Activated CD4-positive, alpha-beta T cell treated with anti-CD3 and anti-CD28 coated beads, Interleukin-2, amount 10 ng/mL, durations not matched to agents 24 days and 14 days (primary cell): ENCODE measurements at regions of chr1 and their contacts with region 1.

Region 1: GRCh38 chr1:200351826-200352549 is 57.8 kb downstream of the ZNF281 start:
- DNase-seq: peak; percentile 77
- H3K4me3 Mint-ChIP-seq: peak overlapping the region; percentile 53
- H3K27ac Mint-ChIP-seq: peak overlapping the region; percentile 67
- H3K4me1 Mint-ChIP-seq: peaks cover 38% of the 10 kb centered on the region
- H3K27me3 Mint-ChIP-seq: no peaks in the 10 kb centered on the region

Region 2: DNA sequence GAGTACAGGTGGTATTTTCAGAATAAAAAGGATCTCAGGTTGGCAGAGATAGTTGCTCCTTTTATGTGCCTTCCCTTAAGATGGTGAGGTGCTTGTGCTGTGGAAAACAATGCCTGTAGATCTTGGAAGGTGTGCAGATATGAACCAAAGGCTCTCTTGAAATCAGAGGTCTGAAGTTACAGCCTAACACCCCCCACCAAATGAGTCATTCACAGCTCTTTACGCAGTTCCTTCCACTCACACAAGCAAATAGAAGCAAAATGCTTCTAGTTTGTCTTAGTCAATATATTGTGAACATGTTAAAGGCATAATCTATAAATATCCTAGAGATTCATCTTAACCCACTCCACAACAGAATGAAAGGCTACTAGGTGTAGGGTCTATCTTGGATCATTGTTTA is 453.3 kb before region 1 on chr1:
- intact Hi-C with region 1: no loop called
- DNase-seq: no peak
- H3K4me3 Mint-ChIP-seq: no peak overlapping the region
- H3K27ac Mint-ChIP-seq: no peak overlapping the region
- H3K4me1 Mint-ChIP-seq: no peaks in the 10 kb centered on the region
- H3K27me3 Mint-ChIP-seq: no peaks in the 10 kb centered on the region

Region 3: DNA sequence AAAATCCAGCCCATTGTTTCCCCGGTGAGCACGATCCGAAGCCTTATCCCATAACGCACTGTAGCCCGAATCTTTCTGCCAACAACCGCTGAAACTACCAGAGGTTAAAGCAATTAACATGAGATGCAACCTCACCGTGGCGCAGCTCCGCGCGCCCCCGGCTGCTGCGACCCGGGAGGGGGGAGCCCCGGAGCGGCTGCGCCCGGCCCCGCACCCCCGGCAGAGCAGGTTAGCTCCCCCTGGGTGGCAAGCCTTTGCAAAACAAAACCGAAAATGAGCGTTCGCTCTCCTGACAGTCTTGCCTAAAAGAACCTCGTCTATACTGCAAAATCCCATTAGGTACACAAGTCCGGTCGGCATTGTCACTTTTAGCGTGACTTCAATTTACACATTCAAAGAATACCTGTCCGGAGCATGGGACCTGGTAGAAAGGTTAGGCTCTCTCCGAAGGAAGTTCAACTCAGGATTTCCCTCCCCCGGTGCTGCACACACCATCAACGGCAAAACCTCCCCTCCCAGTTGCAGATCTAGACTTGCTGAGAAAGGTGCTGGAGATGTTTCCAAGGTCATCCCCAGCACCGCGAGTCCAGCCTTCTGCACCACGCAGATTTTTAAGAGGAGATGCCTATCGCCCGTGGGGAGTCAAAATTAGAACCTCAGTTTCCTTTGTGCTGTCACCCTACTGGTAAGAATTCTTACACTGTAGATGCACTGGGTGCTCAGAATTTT is 49.6 kb before region 1 on chr1:
- intact Hi-C with region 1: loop called (anchors 2 kb)
- DNase-seq: peak; percentile 90
- H3K4me3 Mint-ChIP-seq: peak overlapping the region; percentile 86
- H3K27ac Mint-ChIP-seq: peak overlapping the region; percentile 17
- H3K4me1 Mint-ChIP-seq: peaks cover 20% of the 10 kb centered on the region
- H3K27me3 Mint-ChIP-seq: peaks cover 38% of the 10 kb centered on the region

Region 4: DNA sequence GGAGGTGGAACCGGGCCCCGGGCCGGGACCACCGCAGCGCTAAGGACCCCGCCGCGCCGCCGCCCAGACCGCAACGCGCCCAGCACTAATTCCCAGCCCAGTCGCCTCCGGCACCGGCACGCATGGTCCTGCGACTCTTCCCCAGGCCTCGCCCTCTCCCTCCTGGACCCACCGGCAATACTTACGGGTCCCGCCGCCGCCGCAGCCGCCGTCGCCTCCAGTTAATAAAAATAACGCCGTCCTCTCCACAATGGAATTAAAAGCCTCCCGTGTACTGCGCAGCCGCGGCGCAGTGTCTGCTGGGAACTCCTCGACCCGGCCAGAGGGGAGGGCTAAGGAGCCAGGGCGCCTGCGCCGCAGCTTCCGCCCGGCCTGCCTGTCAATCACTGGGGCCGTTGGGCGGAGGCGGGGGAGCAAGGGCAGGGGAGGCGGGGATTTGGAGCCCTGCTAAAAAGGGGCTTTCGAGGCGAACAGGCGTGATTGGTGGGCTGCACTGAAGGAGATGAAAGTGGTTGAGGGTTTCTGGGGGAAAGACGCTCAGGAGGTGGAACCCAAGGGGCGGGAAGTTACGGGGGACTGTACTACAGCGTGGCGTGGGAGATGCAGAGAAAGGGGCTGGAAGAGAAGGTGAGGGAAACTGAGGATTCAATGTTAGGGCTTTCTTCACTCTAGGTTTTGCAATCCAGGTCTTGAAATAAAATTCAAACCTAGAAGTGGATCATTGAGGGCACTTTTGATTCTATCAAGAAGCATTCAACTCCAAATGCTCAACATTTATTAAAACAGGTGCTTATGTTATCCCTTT is 58.0 kb after region 1 on chr1 and contains the start of gene ZNF281:
- intact Hi-C with region 1: loop called (anchors 2 kb)
- DNase-seq: peak; percentile 98
- H3K4me3 Mint-ChIP-seq: peak within 1 kb of the TSS; percentile 90
- H3K27ac Mint-ChIP-seq: peak within 1 kb of the TSS; percentile 95
- H3K4me1 Mint-ChIP-seq: peaks cover 50% of the 10 kb centered on the region
- H3K27me3 Mint-ChIP-seq: peaks cover 8% of the 10 kb centered on the region
- total RNA-seq, gene ZNF281: 19.0 and 20.4 TPM in 2 replicates

Region 5: GRCh38 chr1:200423235-200423634 is 71.2 kb after region 1 on chr1:
- intact Hi-C with region 1: no loop called
- DNase-seq: peak; percentile 50
- H3K4me3 Mint-ChIP-seq: no peak overlapping the region
- H3K27ac Mint-ChIP-seq: no peak overlapping the region
- H3K4me1 Mint-ChIP-seq: peaks cover 2% of the 10 kb centered on the region
- H3K27me3 Mint-ChIP-seq: peaks cover 5% of the 10 kb centered on the region

Region 6: GRCh38 chr1:200473698-200474371 is 121.8 kb after region 1 on chr1:
- intact Hi-C with region 1: loop called (anchors 1 kb)
- DNase-seq: peak; percentile 69
- H3K4me3 Mint-ChIP-seq: peak overlapping the region; percentile 17
- H3K27ac Mint-ChIP-seq: peak overlapping the region; percentile 71
- H3K4me1 Mint-ChIP-seq: peaks cover 30% of the 10 kb centered on the region
- H3K27me3 Mint-ChIP-seq: peaks cover 10% of the 10 kb centered on the region

Region 7: GRCh38 chr1:201023517-201023902 is 671.5 kb after region 1 on chr1 and contains the start of gene KIF21B:
- intact Hi-C with region 1: loop called (anchors 5 kb)
- DNase-seq: peak; percentile 98
- H3K4me3 Mint-ChIP-seq: peak within 1 kb of the TSS; percentile 90
- H3K27ac Mint-ChIP-seq: peak within 1 kb of the TSS; percentile 97
- H3K4me1 Mint-ChIP-seq: peaks cover 70% of the 10 kb centered on the region
- H3K27me3 Mint-ChIP-seq: no peaks in the 10 kb centered on the region
- total RNA-seq, gene KIF21B: 48.3 and 49.3 TPM in 2 replicates